Mammary epithelial cell (primary cell): ENCODE measurements at regions of chr6 and their contacts with region 1.

Region 1: DNA sequence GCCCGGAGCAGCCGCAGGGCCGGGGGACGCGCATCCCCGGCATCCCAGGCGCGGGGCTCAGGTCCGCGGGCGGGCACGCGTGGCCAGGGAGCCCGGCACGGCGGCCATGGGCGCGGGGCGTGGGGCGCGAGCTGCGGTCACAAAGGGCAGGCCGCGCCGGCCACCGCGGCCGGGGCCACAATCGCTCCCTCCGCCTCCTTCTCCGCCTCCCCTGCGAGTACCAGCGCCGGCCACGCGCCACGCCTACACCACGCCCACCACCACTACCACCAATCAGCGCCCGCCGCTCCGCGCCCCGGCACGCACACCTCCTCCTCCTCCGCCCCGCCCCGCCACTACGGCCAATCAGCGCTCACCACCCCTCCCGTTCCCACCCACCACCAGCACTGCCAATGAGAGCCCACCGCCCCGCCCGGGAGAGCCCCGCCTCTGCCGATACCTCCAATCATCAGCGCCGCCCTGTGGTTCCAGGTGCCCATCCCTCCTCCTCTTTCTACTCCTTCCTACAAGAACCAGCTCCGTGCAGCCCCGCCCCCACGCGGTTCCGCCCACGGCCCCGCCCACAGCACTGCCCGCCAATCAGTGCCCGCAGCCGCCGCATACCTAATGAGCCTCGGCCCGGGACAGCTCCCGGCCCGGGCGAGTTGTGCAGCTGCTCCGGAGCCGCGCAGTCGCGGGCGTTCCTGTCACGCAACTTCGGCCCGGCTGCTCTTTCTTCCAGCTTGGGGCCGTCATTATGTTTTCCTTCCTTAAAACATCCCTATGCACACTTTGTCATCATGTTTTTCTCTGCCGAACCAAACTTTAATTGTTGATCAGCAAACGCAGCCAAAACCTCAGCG is at the start of gene RPS6KA2:
- DNase-seq: peak; percentile 99
- H3K4me3 ChIP-seq: peak within 1 kb of the TSS; percentile 55 to 91 (median 86)
- H3K27ac ChIP-seq: peak within 1 kb of the TSS; percentile 62
- H3K4me1 ChIP-seq: peaks cover 33% of the 10 kb centered on the region
- H3K27me3 ChIP-seq: no peaks in the 10 kb centered on the region
- CTCF ChIP-seq: no peak
- total RNA-seq, gene RPS6KA2: 47.8 to 48.8 TPM

Region 2: GRCh38 chr6:166382933-166383801 is 244.1 kb before region 1 on chr6 and contains the start of gene MPC1:
- CTCF ChIA-PET with region 1: interaction called, 21 read pairs
- dilution Hi-C with region 1: no loop called
- in situ Hi-C with region 1: no loop called
- intact Hi-C with region 1: no loop called
- DNase-seq: peak; percentile 97
- H3K4me3 ChIP-seq: peak within 1 kb of the TSS; percentile 72 to 91 (median 86)
- H3K27ac ChIP-seq: peak within 1 kb of the TSS; percentile 66
- H3K4me1 ChIP-seq: peaks cover 3% of the 10 kb centered on the region
- H3K27me3 ChIP-seq: no peaks in the 10 kb centered on the region
- CTCF ChIP-seq: no peak
- total RNA-seq, gene MPC1: 21.5 to 24.8 TPM

Region 3: DNA sequence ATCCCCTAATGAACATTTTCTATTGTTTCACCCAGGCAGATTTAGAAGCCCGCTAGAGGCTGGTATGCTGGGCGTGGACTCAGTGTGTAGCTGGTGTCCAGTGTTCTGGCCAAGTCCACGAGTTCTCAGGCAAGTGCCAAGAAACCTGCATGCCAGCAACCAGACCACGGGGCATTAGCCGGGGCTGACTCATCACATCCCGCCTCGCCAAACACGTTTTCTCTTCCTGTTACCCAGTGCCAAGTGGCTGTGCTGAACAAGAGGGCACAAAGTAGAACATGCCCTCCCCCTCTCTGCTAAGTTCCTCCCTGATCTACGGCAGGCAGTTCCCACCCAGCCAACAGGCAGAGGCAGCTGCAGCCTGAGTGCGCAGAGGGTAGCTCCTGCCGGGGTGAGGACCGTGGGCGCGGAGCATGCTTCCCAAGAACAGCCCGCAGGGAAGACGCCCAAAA is 70.4 kb before region 1 on chr6:
- CTCF ChIA-PET with region 1: no interaction called
- dilution Hi-C with region 1: no loop called
- in situ Hi-C with region 1: no loop called
- intact Hi-C with region 1: loop called (anchors 1 kb)
- DNase-seq: peak; percentile 99
- H3K4me3 ChIP-seq: peak overlapping the region in 1 of 3 experiments; percentile 17
- H3K27ac ChIP-seq: peak overlapping the region; percentile 83
- H3K4me1 ChIP-seq: peaks cover 57% of the 10 kb centered on the region
- H3K27me3 ChIP-seq: no peaks in the 10 kb centered on the region
- CTCF ChIP-seq: peak in 1 of 2 donors; percentile 2

Region 4: DNA sequence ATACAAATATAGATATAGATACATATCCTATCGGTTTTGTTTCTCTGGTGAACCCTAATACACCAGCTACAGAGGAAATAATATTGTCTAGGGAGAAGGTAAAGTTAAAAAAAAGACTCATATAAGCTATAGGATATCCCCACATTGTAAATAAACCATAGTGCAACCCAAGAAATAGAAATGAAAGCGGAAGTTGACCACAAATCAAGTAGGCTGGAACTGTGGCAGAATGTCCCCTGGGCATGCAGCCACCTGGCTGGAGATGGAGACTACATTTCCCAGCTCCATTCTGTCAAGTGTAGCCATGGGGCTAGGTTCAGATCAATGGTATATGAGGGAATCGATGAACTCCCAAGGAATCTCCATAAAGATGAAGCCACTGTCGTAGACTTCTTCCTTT is 69.9 kb after region 1 on chr6:
- CTCF ChIA-PET with region 1: no interaction called
- dilution Hi-C with region 1: no loop called
- in situ Hi-C with region 1: no loop called
- intact Hi-C with region 1: no loop called
- DNase-seq: no peak
- H3K4me3 ChIP-seq: no peak overlapping the region
- H3K27ac ChIP-seq: no peak overlapping the region
- H3K4me1 ChIP-seq: peaks cover 4% of the 10 kb centered on the region
- H3K27me3 ChIP-seq: no peaks in the 10 kb centered on the region
- CTCF ChIP-seq: no peak

Region 5: GRCh38 chr6:166757232-166758135 is 130.2 kb after region 1 on chr6:
- CTCF ChIA-PET with region 1: no interaction called
- dilution Hi-C with region 1: no loop called
- in situ Hi-C with region 1: no loop called
- intact Hi-C with region 1: loop called (anchors 5 kb)
- DNase-seq: peak; percentile 58
- H3K4me3 ChIP-seq: peak overlapping the region in 2 of 3 experiments; percentile 14 to 34
- H3K27ac ChIP-seq: no peak overlapping the region
- H3K4me1 ChIP-seq: peaks cover 6% of the 10 kb centered on the region
- H3K27me3 ChIP-seq: no peaks in the 10 kb centered on the region
- CTCF ChIP-seq: no peak

Region 6: DNA sequence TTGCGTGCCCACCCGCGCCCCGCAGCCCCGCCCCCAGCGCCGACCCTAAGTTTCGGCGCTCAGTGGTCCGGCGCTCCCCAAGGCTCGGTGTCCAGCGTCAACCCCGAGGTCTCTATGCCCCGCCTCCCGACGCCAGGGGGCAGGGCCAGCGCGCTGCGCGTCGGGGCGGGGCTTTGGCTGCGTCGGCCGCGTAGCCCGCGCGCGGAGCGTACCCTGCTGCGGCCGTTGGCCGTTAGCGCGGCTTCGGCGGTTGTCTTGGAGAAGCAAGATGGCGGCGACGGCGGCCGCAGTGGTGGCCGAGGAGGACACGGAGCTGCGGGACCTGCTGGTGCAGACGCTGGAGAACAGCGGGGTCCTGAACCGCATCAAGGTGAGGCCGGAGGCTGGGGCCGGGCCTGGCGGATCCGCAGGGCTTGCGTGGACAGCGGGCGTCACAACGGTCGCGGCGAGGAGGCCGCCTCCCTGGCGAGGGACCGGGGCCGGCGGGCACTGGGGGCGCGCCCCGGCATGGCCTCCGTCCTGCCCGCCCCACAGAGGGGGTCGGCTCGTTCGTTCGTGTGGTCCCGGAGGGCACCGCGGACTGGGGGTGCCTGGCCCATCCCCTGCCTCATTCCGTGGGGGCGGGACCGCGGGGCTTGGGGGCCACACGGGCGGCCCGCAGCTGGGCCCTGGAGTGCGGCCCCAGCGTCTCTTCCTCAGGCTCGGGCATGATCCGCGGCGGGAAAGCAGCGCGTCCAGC is 372.1 kb after region 1 on chr6 and contains the start of gene CEP43:
- CTCF ChIA-PET with region 1: no interaction called
- dilution Hi-C with region 1: no loop called
- in situ Hi-C with region 1: no loop called
- intact Hi-C with region 1: loop called (anchors 10 kb)
- DNase-seq: peak; percentile 94
- H3K4me3 ChIP-seq: peak within 1 kb of the TSS; percentile 88 to 98 (median 91)
- H3K27ac ChIP-seq: peak within 1 kb of the TSS; percentile 76
- H3K4me1 ChIP-seq: peaks cover 14% of the 10 kb centered on the region
- H3K27me3 ChIP-seq: no peaks in the 10 kb centered on the region
- CTCF ChIP-seq: no peak
- total RNA-seq, gene CEP43: 16.3 to 17.3 TPM